Activated CD4-positive, alpha-beta T cell treated with anti-CD3 and anti-CD28 coated beads for 36 hours (primary cell): ENCODE measurements at regions of chr4 and their contacts with region 1.

Region 1: GRCh38 chr4:98030059-98030458 is 113.2 kb downstream of the STPG2 start:
- DNase-seq: no peak
- ATAC-seq: no peak
- H3K4me3 Mint-ChIP-seq: no peak overlapping the region
- H3K27ac Mint-ChIP-seq: no peak overlapping the region
- H3K4me1 Mint-ChIP-seq: no peaks in the 10 kb centered on the region
- H3K27me3 Mint-ChIP-seq: no peaks in the 10 kb centered on the region

Region 2: DNA sequence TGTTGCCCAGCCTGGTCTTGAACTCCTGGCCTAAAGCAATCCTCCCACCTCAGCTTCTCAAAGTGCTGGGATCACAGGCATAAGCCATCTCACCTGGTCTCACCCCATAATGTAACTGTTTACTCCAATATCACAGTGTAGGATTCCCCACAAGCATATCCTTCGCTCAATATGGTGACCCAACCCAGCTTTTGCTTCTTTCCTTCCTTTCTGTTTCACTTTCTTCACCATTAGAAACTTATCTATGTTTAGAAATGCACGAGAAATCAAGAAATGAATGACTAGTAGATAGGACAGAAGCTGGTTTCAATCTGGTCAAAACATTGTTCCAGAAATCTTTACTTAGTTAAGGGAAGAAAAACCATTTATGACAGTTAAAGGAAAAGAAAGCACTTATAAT is 609.5 kb after region 1 on chr4:
- CTCF ChIA-PET with region 1: no interaction called
- POLR2A ChIA-PET with region 1: no interaction called
- intact Hi-C with region 1: loop called in 1 of 2 experiments (anchors 10 kb)
- DNase-seq: no peak
- ATAC-seq: peak; percentile 66
- H3K4me3 Mint-ChIP-seq: peak overlapping the region; percentile 40
- H3K27ac Mint-ChIP-seq: peak overlapping the region; percentile 79
- H3K4me1 Mint-ChIP-seq: peaks cover 49% of the 10 kb centered on the region
- H3K27me3 Mint-ChIP-seq: no peaks in the 10 kb centered on the region